ENCODE measurements at regions of chr19 and their contacts with region 1.

Region 1: DNA sequence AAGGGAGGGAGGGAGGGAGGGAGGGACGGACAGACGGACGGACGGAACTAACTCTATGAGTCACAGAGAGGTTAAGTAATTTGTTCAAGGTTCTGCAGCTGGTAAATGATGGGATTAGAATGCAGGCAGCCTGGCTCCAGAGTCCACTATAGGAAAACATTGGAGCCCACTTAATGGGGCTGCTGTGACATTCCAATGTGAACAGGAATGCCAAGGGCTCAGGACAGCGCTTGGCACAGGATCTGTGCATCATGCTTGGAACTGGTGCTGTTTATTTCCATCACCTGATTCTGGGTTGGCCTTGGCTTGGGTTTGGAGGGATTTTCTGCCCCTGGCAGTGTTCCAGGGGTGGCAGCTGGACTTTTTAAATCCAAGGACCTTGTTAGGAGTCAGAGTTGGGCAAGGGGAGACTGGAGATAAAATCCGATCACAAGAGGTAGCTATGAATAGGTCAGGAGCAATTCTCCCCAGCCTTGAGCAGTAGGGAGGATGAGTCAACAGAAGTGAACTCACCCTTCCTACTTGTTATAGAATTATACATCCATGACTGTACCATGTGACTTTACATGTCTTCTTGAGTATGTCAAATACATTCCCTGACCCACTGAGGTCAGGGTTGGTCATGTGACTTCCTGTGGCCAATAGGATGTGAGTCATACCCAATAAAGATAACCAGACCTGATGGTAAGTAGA is 7.8 kb upstream of the HIF3A start:
- DNase-seq: peak; percentile 42
- ATAC-seq: peak; percentile 79 to 87

Region 2: DNA sequence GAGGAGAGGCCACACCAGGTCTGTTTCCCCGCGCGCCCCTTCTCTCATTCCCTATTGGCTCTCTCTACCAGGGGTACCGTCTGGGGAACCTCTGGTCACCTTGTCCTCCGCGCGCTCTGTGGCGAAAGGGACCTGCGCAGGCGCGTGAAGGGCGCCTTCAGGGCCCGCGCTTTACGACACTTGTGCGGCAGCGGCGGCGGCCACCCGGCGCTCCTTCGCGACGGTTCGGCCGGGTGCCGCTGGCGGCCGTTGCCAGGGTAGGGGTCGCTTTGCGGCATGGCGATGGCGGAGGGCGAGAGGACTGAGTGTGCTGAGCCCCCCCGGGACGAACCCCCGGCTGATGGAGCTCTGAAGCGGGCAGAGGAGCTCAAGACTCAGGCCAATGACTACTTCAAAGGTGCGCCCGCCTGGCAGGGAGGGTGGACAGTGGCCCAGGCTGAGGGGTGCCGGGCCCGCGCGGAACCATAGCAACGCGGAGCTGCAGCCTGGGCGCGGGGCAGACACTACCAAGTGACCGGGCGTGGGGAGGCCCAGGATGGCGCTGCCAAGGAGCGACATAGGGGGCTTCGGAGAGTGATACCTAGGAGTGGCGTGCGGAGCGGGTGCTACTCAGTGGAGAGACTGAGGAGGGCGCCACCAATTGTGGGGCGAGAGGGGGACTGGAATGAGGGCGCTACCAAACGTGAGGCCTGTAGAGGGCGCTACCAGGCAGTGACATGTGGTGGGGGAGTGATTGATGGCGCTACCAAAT is 58.0 kb after region 1 on chr19 and contains the start of gene PPP5C:
- intact Hi-C with region 1: loop called (anchors 10 kb)
- DNase-seq: peak; percentile 95
- ATAC-seq: peak; percentile 86 to 88
- total RNA-seq, gene PPP5C: 60.5 to 75.1 TPM

Region 3: DNA sequence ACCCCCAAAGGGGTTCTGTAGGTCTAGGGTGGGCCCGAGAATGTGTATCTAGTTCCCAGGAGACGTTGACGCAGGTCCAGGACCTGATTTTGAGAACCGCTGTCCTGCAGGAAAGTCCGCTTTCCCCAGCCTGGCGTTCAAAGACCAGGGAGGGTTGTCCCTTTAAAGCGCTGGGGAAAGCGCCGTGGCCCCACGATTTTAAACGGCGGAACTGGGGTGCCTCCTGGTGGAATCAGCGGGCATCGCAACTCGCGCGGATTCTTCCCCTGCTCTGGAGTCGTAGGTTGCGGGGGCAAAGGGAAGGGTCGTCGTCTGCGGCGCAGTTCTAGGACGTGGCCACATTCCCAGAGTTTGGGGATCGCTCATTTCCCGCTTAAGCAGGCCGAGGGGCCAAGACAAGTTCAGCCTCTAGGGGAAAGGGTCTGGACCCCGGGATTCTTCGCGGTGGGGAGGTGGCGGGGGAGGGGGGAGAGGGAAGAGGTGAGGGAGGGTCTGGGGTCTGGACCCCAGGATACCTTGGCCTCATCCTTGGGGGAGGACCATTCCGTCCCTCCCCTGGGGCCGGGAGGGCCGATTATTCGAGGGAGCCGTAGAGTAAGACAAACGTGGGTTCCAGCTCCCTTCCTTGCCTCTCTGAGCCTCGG is 198.9 kb after region 1 on chr19:
- intact Hi-C with region 1: loop called in 1 of 2 experiments (anchors 10 kb)
- DNase-seq: peak; percentile 77
- ATAC-seq: peak; percentile 71 to 83

Region 4: DNA sequence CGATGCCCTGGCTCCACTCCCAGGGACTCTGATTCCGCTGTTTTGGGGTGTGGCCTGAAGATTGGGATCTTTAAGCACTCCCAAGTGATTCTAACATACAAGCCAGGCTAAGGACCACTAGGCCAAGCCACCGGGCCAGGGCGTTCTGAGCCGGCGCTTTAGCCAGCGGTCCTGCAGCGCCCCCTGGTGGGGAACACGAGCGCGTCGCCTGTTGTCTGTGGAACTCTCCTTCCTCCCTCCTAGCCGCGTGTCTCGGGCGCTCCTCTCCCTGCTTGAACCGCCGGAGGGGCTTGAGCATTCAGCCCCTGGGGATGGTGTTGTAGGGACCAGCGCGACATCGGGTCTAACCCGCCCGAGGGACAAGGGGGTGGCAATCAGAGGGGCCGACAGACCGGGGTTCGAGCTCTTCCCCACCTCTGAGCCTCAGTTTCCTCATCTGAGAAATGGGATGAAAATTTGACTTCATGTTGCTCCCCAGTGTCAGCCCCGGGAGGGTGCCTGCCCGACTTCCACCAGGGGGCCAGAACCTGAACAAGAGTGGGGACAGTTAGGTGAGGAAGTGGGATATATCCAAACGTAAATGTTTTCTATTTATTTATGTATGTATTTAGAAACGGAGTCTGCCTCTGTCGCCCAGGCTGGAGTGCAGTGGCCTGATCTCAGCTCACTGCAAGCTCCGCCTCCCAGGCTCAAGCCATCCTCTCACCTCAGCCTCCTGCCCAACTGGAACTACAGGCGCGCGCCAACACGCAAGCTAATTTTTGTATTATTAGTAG is 224.6 kb after region 1 on chr19:
- intact Hi-C with region 1: loop called in 1 of 2 experiments (anchors 10 kb)
- DNase-seq: peak; percentile 85
- ATAC-seq: peak; percentile 86 to 91

Measured in left cardiac atrium (tissue), 4 donors.